ENCODE measurements at regions of chr21 and their contacts with region 1.

Region 1: DNA sequence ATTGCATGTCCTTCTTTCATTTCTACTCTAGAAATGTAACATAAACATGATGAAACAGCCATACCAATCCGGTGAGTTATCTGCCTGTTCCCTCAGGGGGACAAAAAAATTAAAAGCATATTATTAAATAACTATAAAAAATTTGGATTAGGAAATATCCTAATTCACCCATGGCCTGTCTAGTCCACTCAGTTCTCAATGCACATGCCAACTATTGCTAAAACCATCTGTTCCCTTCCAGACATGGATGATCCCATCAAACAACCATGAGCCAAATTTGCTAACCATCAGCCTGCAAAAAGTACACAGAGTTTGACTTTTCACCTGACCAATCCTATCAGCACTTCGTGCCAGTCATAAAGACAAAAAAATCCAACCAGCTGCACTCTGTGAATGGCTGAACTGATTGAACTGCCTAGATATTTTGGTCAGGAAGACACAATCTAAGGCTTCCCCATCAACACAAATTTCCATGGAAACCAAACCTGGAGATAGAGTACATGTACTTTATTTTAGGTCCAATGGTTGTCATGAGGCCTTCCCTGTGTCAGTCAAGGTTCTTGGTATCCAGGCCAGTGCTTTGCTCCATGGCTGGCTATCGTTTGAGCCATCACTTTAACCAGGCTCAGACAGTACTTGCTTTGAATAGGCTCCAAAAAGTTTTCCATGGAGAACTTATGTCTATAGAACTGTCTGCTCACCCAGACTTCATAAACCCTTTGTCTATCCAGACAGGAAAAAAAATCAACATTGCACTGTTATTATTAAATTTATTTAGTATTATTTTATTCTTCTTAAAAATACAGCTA is 570.8 kb downstream of the LTN1 start:
- DNase-seq: no peak
- H3K4me3 ChIP-seq: no peak overlapping the region
- H3K27ac ChIP-seq: no peak overlapping the region
- H3K4me1 ChIP-seq: no peaks in the 10 kb centered on the region
- H3K27me3 ChIP-seq: no peaks in the 10 kb centered on the region
- CTCF ChIP-seq: no peak
- POLR2A ChIP-seq: no peak

Region 2: DNA sequence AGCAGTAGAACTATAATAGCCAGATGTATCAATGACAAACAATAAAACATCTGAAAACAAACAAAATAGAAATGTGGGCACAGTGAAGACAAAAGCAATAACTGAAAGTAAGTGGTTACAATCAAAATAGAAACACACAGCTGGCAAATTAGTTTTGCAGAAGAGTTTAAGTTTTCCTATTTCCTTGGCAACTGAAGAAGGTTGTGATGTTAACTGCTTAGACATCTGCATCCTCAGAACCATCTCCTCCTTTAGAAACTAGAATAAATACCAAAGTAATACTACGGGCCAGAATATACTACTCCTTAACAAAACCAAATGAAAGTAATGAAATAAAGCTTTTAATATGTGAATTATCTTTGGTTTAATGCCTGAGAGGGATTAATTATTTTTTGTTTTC is 34.7 kb before region 1 on chr21:
- CTCF ChIA-PET with region 1: no interaction called
- POLR2A ChIA-PET with region 1: no interaction called
- dilution Hi-C with region 1: no loop called
- intact Hi-C with region 1: loop called (anchors 5 kb)
- DNase-seq: no peak
- H3K4me3 ChIP-seq: no peak overlapping the region
- H3K27ac ChIP-seq: no peak overlapping the region
- H3K4me1 ChIP-seq: no peaks in the 10 kb centered on the region
- H3K27me3 ChIP-seq: no peaks in the 10 kb centered on the region
- CTCF ChIP-seq: no peak
- POLR2A ChIP-seq: no peak

Region 3: DNA sequence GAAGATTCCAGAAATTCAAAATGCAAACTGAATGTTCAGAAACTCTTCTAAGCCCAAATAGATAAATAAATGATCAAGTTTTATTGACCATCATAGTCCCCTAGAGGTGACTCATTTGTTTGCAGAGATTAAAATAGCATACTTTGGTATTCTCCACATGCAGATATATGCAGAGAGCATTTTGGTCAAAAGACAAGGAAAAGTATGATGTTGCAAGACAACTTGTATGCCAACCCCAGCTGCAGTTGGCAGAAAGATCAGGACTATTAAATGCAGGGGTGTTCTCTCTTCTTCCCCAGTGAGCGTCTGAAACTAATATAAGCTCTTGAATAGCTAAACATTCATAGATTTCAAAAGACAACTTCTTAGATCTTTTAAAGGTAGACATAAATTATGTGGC is 165.8 kb after region 1 on chr21:
- CTCF ChIA-PET with region 1: no interaction called
- POLR2A ChIA-PET with region 1: no interaction called
- dilution Hi-C with region 1: no loop called
- intact Hi-C with region 1: no loop called
- DNase-seq: no peak
- H3K4me3 ChIP-seq: no peak overlapping the region
- H3K27ac ChIP-seq: no peak overlapping the region
- H3K4me1 ChIP-seq: no peaks in the 10 kb centered on the region
- H3K27me3 ChIP-seq: no peaks in the 10 kb centered on the region
- CTCF ChIP-seq: no peak
- POLR2A ChIP-seq: no peak

Measured in endothelial cell of umbilical vein (primary cell).